KBM-7 (cell line): ENCODE measurements at regions of chr11 and their contacts with region 1.

Region 1: GRCh38 chr11:31240338-31240904 is 129.1 kb downstream of the DCDC1 start:
- DNase-seq: peak; percentile 55

Region 2: GRCh38 chr11:31870609-31871309 is 630.3 kb after region 1 on chr11:
- in situ Hi-C with region 1: loop called (anchors 25 kb)
- DNase-seq: peak; percentile 73

Region 3: GRCh38 chr11:32176223-32176934 is 936.0 kb after region 1 on chr11:
- in situ Hi-C with region 1: loop called (anchors 25 kb)
- DNase-seq: peak; percentile 92